ENCODE measurements at regions of chr15 and their contacts with region 1.

Region 1: GRCh38 chr15:74835307-74835823 is 7.6 kb downstream of the ULK3 start:
- DNase-seq: peak; percentile 47 to 78 (median 67)
- H3K4me3 ChIP-seq: no peak overlapping the region
- H3K27ac ChIP-seq: no peak overlapping the region
- H3K4me1 ChIP-seq: no peaks in the 10 kb centered on the region
- H3K27me3 ChIP-seq: no peaks in the 10 kb centered on the region
- CTCF ChIP-seq: peak; percentile 58 to 77 (median 68)
- POLR2A ChIP-seq: no peak

Region 2: GRCh38 chr15:74555192-74555591 is 280.2 kb before region 1 on chr15:
- intact Hi-C with region 1: no loop called
- DNase-seq: no peak
- H3K4me3 ChIP-seq: no peak overlapping the region
- H3K27ac ChIP-seq: no peak overlapping the region
- H3K4me1 ChIP-seq: no peaks in the 10 kb centered on the region
- H3K27me3 ChIP-seq: no peaks in the 10 kb centered on the region
- CTCF ChIP-seq: no peak
- POLR2A ChIP-seq: no peak

Region 3: DNA sequence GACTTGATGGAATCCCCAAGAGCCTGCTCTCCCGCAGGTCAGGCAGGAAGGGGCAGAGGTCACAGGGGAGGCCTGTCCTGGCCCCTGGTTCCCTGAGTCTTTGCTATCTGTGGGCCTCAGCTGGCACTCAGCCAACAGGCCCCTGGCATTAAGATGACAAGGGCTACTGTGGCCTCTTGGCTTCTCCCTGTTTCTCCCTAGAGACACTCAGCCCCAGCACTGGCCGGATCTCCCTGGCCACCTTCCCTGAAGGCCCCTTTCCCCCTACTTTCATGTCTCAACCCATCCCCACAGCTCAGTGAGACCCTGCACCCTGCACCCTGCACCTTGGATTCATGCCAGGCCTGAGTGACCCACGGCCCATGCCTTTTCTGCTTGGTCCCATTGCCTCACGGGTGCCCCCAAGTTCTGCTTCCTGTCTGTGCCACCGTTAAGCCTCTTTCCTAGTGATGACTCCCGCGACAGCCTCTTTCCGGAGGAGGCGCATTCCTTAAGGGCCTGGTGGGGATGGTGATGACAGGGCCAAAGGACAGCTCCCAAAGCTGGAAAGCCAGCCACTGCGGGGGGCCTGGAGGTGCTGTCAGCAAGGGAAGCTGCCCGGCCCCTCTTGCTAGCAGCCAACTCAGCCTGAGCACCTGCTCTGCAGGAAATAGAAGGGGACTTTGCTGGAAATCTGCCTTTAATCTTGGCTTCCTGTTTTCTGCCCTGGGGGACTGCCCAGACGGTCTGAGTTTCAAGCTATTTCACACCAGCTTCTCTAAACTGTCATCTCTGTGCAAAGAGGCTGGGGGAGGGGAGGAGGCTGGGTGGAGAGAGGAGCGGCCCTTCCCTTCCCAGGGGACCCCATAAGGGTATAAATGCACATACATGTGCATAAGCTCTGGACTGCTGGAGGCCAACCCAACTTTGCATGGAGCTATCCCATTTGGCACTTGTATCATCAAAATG is 58.3 kb before region 1 on chr15:
- intact Hi-C with region 1: loop called (anchors 5 kb)
- DNase-seq: no peak
- H3K4me3 ChIP-seq: no peak overlapping the region
- H3K27ac ChIP-seq: peak overlapping the region in 3 of 5 donors; percentile 5 to 64 (median 23)
- H3K4me1 ChIP-seq: peaks cover 6 to 26% of the 10 kb centered on the region in 2 donors
- H3K27me3 ChIP-seq: no peaks in the 10 kb centered on the region
- CTCF ChIP-seq: no peak
- POLR2A ChIP-seq: no peak

Measured in adrenal gland (tissue), 19 donors.